Mammary epithelial cell (primary cell): ENCODE measurements at regions of chr2 and their contacts with region 1.

Region 1: GRCh38 chr2:110837446-110838405 is 105.4 kb downstream of the ACOXL start:
- DNase-seq: no peak
- H3K4me3 ChIP-seq: no peak overlapping the region
- H3K27ac ChIP-seq: no peak overlapping the region
- H3K4me1 ChIP-seq: peaks cover 4% of the 10 kb centered on the region
- H3K27me3 ChIP-seq: no peaks in the 10 kb centered on the region
- CTCF ChIP-seq: no peak

Region 2: DNA sequence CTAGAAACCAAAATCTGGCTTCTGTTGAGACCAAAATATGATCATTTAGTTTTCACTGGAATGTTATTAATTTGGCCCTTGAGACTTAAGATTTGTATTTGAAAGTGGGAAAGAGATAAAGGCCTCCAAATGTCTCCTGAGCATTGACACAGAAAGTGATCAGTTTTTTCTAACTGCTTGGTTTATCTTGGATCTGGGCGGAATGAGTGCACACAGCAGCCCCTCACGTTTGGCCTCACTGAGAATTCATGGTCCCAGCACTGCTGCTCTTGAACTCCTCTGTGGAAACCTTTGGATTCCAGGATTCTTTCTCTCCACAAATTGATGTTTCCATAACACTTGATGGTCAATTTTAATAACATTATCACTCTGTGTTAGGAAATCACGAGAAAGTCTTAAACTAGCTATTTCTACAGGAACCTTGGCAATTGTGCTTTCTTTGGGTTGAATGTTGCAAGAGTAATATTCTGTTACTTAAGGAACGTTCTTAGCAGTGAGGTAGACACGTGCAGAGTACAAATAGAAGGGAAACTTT is 102.7 kb after region 1 on chr2:
- CTCF ChIA-PET with region 1: no interaction called
- dilution Hi-C with region 1: loop called (anchors 5 kb)
- in situ Hi-C with region 1: no loop called
- intact Hi-C with region 1: no loop called
- DNase-seq: no peak
- H3K4me3 ChIP-seq: no peak overlapping the region
- H3K27ac ChIP-seq: no peak overlapping the region
- H3K4me1 ChIP-seq: no peaks in the 10 kb centered on the region
- H3K27me3 ChIP-seq: peaks cover 5% of the 10 kb centered on the region
- CTCF ChIP-seq: no peak